ENCODE measurements at regions of chr10 and their contacts with region 1.

Region 1: GRCh38 chr10:11242443-11243387 is 225.0 kb downstream of the CELF2 start:
- DNase-seq: peak; percentile 66
- CTCF ChIP-seq: peak; percentile 21

Region 2: DNA sequence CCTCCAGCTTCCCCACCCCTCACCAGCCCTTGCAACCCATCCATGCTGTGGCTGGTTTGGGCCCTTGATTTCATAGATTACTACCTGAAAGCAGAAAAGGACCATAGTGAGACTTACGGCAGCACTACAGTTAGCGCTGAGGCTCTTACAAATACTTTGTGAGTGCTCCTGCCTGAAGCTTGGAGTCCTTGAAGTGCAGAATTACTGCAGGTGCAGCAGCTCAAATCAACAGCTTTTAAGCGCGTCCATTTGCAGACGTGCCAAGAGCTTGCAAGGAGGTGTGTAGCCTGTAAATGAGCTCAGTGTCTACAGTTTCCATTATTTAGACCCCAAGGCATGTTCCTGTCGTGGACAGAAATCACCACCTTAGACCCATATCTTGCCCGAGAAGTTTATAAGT is 122.0 kb before region 1 on chr10:
- CTCF ChIA-PET with region 1: no interaction called
- POLR2A ChIA-PET with region 1: no interaction called
- DNase-seq: no peak
- CTCF ChIP-seq: no peak

Region 3: GRCh38 chr10:11178606-11179515 is 63.9 kb before region 1 on chr10:
- CTCF ChIA-PET with region 1: interaction called, 11 read pairs
- POLR2A ChIA-PET with region 1: interaction called, 3 read pairs
- DNase-seq: peak; percentile 79
- CTCF ChIP-seq: no peak

Region 4: GRCh38 chr10:11225935-11226334 is 16.8 kb before region 1 on chr10:
- CTCF ChIA-PET with region 1: interaction called, 25 read pairs
- POLR2A ChIA-PET with region 1: interaction called, 5 read pairs
- DNase-seq: no peak
- CTCF ChIP-seq: no peak

Region 5: DNA sequence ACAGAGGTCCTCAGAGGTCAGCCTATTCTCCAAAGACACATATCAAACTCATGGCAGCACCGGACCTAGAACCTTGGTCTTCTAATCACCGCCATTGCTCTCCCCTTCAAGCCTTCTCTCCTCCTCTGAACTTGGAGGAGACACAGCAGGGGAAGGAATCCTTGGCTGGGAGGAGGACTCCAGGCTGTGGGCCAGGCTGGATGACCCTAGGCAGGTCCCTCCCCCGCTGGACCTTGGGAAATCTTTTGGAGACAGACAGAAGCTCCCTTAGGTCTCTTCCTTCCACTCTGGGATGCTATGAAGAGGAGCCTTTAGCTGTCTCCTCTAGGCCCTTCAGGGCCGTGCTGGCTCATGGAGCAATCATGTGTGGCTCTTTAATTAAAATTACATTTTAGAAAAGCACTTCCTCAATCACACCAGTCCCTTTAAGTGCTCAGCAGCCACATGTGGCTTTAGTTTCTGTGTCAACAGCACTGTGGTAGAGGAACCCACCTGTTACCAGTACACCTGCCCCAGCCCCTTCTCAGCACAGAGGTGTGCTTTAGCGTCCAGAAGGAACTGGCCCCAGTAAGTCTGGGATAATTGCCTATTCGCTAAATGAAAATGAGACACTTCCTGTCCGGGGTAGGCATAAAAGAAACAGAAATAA is 13.2 kb after region 1 on chr10:
- CTCF ChIA-PET with region 1: interaction called, 25 read pairs
- POLR2A ChIA-PET with region 1: interaction called, 8 read pairs
- DNase-seq: no peak
- CTCF ChIP-seq: no peak